Activated CD4-positive, alpha-beta T cell treated with anti-CD3 and anti-CD28 coated beads, Interleukin-2, amount 10 ng/mL, durations not matched to agents 24 days and 14 days (primary cell): ENCODE measurements at regions of chr4 and their contacts with region 1.

Region 1: GRCh38 chr4:80072744-80073472 is at the start of gene ANTXR2:
- DNase-seq: peak; percentile 93
- H3K4me3 Mint-ChIP-seq: peak within 1 kb of the TSS; percentile 97
- H3K27ac Mint-ChIP-seq: peak within 1 kb of the TSS; percentile 95
- H3K4me1 Mint-ChIP-seq: peaks cover 68% of the 10 kb centered on the region
- H3K27me3 Mint-ChIP-seq: peaks cover 2% of the 10 kb centered on the region
- total RNA-seq, gene ANTXR2: 8.2 and 10.6 TPM in 2 replicates

Region 2: DNA sequence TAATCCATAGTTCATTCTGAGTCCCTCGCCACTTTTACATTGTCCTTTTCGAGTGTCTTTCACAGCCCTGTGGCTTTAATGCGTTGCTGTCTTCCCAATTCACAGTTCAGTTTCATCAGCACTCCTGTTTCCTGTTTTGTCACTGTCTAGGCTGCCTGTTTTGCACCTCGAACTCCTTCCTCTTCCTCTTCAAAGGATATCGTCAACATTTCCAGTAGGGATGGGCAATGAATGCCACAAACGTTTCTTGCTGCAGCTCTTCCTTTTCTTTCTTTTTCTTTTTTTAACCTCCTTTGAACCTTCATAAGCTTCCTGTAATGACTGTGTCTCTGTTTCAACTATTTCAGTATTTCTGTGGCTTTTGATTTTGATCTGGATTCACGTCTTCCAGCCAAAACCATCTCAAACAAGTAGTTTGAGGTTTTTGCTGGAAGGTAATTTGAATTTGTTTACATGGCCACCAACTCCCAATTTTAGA is 1415.9 kb before region 1 on chr4:
- intact Hi-C with region 1: loop called (anchors 5 kb)
- DNase-seq: peak; percentile 80
- H3K4me3 Mint-ChIP-seq: peak overlapping the region; percentile 61
- H3K27ac Mint-ChIP-seq: peak overlapping the region; percentile 65
- H3K4me1 Mint-ChIP-seq: peaks cover 38% of the 10 kb centered on the region
- H3K27me3 Mint-ChIP-seq: no peaks in the 10 kb centered on the region

Region 3: DNA sequence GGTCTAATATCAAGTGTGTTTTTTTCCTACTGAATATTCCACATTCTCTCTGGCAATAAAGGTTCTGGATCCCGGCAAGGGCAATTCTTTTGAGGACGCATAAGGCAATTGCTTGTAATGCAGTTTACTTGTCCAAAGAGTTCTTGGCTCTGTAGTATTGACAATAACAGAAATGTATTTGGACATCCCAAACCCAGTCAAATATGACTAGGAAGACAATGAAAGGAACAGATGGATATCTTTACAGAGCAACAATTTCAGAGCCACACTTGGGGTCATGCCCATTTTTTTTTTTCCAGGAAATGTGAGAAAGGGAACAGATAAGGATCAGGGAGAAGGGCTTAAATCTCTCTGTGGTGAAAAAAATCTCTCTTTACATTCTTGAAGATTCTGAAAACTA is 677.1 kb before region 1 on chr4:
- intact Hi-C with region 1: no loop called
- DNase-seq: no peak
- H3K4me3 Mint-ChIP-seq: no peak overlapping the region
- H3K27ac Mint-ChIP-seq: no peak overlapping the region
- H3K4me1 Mint-ChIP-seq: no peaks in the 10 kb centered on the region
- H3K27me3 Mint-ChIP-seq: no peaks in the 10 kb centered on the region

Region 4: DNA sequence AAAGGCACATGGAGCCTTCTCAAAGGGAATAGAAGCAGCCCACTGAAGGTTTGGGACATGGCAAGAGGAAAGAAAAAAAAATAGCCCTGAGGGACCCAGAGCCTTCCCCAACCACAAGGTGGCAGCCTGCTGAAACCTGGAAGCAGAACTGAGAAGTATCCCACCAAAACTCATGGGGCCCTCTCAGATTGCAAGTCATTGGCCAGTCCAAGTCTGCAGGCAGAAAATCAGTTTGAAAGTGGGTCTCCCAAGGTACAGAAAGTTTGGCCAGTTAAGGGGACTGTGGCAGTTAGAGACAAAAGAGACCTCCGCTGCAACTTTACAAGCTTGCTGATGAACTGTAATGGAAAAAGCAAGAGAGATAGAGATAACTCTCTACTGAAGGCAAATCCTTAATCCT is 155.7 kb before region 1 on chr4:
- intact Hi-C with region 1: loop called (anchors 2 kb)
- DNase-seq: peak; percentile 83
- H3K4me3 Mint-ChIP-seq: no peak overlapping the region
- H3K27ac Mint-ChIP-seq: no peak overlapping the region
- H3K4me1 Mint-ChIP-seq: peaks cover 12% of the 10 kb centered on the region
- H3K27me3 Mint-ChIP-seq: no peaks in the 10 kb centered on the region

Region 5: DNA sequence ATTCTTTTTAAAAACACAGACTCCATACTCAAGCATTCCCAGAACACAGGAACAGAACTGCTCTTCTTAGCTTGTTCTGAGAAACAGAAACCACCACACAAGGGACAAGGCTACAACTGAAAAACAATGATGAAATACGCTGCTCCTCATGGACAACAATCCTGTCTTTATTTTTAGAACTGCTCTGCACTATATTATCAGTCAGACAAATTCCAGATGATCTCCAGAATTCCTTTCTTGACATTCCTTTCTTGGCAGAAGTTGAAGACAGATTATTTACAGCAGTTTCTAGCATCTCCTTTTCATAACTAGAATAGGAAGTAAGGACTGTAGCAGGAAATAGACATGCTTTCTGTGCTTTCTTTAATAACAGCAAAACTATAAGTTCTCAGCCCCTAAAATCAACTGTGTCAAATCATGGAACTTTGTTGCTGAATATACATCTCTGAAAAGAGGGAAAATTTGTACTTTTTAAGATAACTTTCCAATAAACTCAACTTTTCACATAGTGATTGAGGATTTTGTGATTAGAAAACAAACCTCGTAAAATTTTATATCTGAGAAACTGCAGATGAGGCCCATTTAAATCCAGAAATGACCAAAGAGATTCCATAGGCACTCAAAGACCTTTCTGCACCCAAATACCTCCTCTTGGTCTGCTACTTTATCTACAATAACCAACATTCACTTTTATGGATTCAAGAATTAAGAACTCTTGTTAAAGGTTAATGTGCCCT is 35.8 kb before region 1 on chr4:
- intact Hi-C with region 1: loop called (anchors 5 kb)
- DNase-seq: no peak
- H3K4me3 Mint-ChIP-seq: peak overlapping the region; percentile 73
- H3K27ac Mint-ChIP-seq: peak overlapping the region; percentile 93
- H3K4me1 Mint-ChIP-seq: peaks cover 25% of the 10 kb centered on the region
- H3K27me3 Mint-ChIP-seq: no peaks in the 10 kb centered on the region

Region 6: DNA sequence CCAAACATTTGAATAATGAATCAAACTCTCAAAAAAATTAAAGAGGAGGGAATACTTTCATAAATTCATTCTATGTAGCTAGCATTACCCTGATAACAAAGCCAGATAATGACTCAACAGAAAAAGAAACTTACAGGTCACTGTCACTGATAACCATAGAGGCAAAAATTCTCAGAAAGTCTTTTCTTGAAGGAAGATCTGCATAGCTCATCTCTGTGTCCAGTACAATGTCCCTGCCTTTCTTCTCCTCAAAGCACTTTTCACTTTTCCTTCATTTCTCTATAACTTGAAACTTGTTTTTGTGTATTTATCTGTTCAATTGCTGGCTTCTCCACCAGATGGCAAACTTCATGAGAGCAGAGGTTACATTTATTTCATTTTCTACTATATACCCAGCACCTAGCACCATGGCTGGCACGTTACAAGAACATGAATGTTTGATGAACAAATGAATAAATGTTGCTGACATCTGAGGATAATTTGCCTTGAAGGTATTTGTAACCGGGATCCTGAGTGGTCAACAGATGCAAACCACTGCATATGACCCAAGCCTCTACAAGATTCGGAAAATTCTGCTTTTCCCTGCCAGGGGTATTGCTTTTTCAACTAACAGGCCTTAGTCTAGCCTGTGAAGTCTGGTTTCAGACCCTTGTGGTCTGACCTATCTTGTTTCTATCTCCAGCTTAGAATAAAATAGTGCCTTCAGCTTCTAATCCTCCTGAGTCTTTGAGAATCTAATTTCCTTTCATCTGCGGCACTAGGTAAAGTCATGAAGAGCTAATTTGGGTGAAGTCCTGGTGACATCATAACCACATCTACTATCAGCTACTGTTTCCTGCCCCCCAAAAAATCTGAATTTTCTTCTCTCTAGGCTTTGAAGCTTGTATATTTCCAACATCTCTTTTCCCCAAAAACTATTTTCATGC is 52.6 kb after region 1 on chr4:
- intact Hi-C with region 1: loop called (anchors 2 kb)
- DNase-seq: peak; percentile 81
- H3K4me3 Mint-ChIP-seq: peak overlapping the region; percentile 35
- H3K27ac Mint-ChIP-seq: peak overlapping the region; percentile 77
- H3K4me1 Mint-ChIP-seq: peaks cover 51% of the 10 kb centered on the region
- H3K27me3 Mint-ChIP-seq: no peaks in the 10 kb centered on the region

Region 7: DNA sequence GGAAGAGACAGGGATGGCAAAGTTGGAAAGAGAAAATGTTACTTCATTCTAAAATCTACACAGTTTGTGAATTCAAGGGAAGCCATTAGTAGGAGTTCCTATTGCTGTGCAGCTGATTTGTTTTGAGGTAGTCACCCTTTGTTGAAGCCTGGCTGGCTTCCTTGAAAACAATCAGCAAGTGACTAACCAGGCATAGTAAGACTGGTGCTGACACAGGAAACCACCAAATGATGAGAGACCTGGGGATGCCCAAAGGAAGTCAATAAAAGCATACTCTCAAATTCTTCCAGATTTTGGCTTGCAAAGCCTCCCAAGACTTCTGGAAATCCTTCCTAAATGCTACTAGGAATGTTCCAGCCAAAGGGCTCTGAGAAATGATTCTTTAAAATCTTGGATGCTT is 100.5 kb after region 1 on chr4:
- intact Hi-C with region 1: loop called (anchors 1 kb)
- DNase-seq: peak; percentile 89
- H3K4me3 Mint-ChIP-seq: peak overlapping the region; percentile 68
- H3K27ac Mint-ChIP-seq: peak overlapping the region; percentile 95
- H3K4me1 Mint-ChIP-seq: peaks cover 50% of the 10 kb centered on the region
- H3K27me3 Mint-ChIP-seq: no peaks in the 10 kb centered on the region

Region 8: DNA sequence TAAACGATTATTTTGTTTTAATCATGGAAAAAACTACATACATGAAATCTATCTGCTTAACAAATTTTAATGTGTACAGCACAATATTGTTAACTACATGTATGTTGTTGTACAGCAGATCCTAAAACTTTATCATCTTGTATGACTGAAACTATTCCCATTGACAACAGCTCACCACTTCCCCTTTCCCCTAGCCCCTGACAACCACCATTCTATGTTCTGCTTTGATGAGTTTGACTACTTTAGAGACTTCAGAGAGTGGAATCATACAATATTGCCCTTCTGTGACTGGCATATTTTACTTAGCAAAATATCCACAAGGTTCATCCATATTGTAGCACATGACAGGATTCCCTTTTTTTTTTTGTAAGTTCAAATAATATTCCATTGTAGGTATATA is 448.5 kb after region 1 on chr4:
- intact Hi-C with region 1: no loop called
- DNase-seq: no peak
- H3K4me3 Mint-ChIP-seq: no peak overlapping the region
- H3K27ac Mint-ChIP-seq: no peak overlapping the region
- H3K4me1 Mint-ChIP-seq: no peaks in the 10 kb centered on the region
- H3K27me3 Mint-ChIP-seq: peaks cover 2% of the 10 kb centered on the region